ENCODE measurements at regions of chr17 and their contacts with region 1.

Region 1: DNA sequence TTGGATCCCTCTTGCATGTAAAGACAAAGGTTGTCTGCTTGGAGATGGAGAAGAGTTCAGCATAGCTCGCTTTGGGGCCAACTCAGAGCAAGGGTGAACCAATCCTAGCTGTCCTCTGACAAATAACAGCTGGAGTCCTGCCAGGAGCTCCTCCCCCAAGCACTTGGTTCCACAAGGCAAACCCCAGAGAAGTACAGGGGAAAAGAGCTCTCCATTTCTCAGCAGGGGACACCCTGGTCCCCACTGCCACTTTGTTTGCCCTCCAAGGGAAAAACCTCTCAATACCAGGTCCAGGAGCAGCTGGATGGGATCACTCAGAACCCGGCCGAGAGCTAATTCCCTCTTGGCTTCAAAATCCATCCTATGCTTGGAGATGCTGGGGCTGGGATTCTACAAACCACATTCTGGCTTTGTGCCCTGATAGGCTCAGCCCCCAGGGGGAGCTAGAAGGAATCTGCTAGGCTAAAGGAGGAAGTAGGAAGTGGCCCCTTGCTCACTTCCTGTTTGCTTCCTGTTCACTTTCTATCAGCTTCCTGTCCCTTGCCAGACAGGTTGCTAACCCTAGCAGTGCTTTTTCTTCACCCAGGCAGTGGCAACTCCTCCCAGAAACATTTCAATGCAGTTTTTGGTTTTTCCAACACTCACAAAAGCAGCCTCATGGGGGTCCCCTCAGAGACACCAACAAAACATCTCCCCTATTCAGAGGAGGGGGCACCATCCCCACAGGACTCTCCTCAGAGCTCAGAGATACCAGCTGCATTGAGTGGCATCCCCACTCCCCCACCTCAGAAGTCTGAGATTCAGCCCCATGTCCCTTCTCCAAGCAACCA is 30.7 kb downstream of the CDRT4 start:
- DNase-seq: peak; percentile 34
- ATAC-seq: no peak
- H3K4me3 ChIP-seq: no peak overlapping the region
- H3K27ac ChIP-seq: peak overlapping the region; percentile 6; the same call in 1 of the 2 replicates
- H3K4me1 ChIP-seq: peaks cover 23% of the 10 kb centered on the region
- H3K27me3 ChIP-seq: no peaks in the 10 kb centered on the region
- CTCF ChIP-seq: peak; percentile 30; the same call in 1 of the 2 replicates
- POLR2A ChIP-seq: no peak
- RAD21 ChIP-seq: no peak

Region 2: GRCh38 chr17:15307710-15308111 is 129.0 kb before region 1 on chr17:
- CTCF ChIA-PET with region 1: no interaction called
- POLR2A ChIA-PET with region 1: no interaction called
- dilution Hi-C with region 1: no loop called
- in situ Hi-C with region 1: no loop called
- intact Hi-C with region 1: loop called (anchors 1 kb)
- DNase-seq: peak; percentile 89
- ATAC-seq: peak; percentile 79
- H3K4me3 ChIP-seq: no peak overlapping the region
- H3K27ac ChIP-seq: peak overlapping the region; percentile 20; the same call in 1 of the 2 replicates
- H3K4me1 ChIP-seq: peaks cover 20% of the 10 kb centered on the region
- H3K27me3 ChIP-seq: peaks cover 8% of the 10 kb centered on the region
- CTCF ChIP-seq: no peak
- POLR2A ChIP-seq: no peak
- RAD21 ChIP-seq: no peak

Region 3: DNA sequence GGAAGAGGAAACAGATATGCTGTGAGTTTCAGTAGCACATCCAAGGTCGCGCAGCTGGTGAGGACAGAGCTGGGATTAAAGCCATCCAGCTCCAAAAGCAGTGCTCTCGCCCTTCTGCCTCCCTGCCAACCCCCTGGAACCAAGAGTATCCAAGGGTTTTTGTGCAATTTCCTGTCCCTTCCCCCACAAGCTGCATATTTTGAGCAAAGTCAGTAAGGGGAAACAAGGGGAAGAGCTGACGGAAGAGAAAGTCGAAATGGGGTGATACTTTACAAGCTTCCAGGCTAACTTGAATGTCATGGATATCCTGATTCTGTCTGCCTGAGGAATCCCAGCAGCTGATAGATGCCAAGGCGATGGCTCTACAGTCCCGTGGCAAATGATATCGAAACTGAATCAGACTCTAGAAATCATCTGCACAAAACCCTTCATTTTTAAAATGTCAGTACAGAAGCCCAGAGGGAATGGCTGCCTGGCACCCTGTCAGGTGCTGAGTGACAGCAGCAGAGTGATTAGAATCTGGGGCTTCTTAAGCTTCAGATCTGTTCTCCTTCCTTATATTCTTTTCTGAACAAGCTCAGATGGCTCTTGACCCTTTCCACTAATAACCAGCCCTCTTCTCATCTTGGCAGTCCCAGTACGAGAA is 52.4 kb before region 1 on chr17:
- CTCF ChIA-PET with region 1: interaction called, 3 read pairs
- POLR2A ChIA-PET with region 1: no interaction called
- dilution Hi-C with region 1: no loop called
- in situ Hi-C with region 1: no loop called
- intact Hi-C with region 1: loop called (anchors 2 kb)
- DNase-seq: peak; percentile 25
- ATAC-seq: peak; percentile 54
- H3K4me3 ChIP-seq: peak overlapping the region; percentile 35; the same call in 1 of the 2 replicates
- H3K27ac ChIP-seq: peak overlapping the region; percentile 82; the same call in 1 of the 2 replicates
- H3K4me1 ChIP-seq: peaks cover 7% of the 10 kb centered on the region
- H3K27me3 ChIP-seq: no peaks in the 10 kb centered on the region; the same call in 1 of the 2 replicates
- CTCF ChIP-seq: no peak
- POLR2A ChIP-seq: no peak
- RAD21 ChIP-seq: no peak

Region 4: GRCh38 chr17:15456972-15457722 is 20.5 kb after region 1 on chr17:
- CTCF ChIA-PET with region 1: interaction called, 11 read pairs
- POLR2A ChIA-PET with region 1: no interaction called
- dilution Hi-C with region 1: no loop called
- in situ Hi-C with region 1: no loop called
- intact Hi-C with region 1: loop called (anchors 2 kb)
- DNase-seq: peak; percentile 84
- ATAC-seq: peak; percentile 76
- H3K4me3 ChIP-seq: no peak overlapping the region
- H3K27ac ChIP-seq: peak overlapping the region; percentile 66
- H3K4me1 ChIP-seq: peaks cover 22% of the 10 kb centered on the region
- H3K27me3 ChIP-seq: no peaks in the 10 kb centered on the region
- CTCF ChIP-seq: peak; percentile 51
- POLR2A ChIP-seq: no peak
- RAD21 ChIP-seq: peak; percentile 54

Region 5: DNA sequence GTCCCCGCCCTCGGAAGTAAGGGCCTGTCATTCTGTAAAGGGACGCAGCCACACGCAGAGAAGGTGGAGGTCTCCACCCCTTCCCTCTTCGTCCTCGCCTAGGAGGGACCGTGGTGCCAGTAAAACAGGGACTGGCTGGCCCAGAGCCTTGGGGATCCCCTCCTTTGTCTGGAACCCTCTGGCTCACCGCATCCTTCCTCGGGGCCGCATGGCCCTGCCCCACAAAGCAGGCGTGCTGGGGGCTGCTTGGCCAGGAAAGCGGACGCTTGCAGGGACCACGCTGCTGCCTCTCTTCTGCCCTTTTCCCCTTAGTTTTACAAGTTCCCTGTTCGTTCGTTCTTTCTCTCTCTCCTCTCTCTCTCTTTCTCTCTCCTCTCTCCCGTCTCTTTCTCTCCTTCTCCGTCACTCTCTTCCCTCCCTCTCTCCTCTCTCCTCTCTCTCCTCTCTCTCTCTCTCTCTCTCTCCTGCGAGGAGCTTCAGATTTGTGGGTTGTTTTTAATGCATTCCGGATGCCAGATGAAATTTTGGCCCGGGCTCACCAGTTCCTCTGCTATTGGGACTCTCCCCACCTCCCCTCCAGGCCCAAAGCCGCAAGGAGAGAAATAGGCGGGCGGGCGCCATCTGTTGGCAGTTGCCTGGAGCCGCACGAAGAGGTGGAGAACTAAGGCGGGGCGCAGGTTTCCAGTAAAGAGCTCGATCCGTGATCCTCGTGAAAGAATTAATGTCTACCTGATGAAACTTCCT is 65.9 kb after region 1 on chr17:
- CTCF ChIA-PET with region 1: interaction called, 3 read pairs
- POLR2A ChIA-PET with region 1: no interaction called
- dilution Hi-C with region 1: no loop called
- in situ Hi-C with region 1: no loop called
- intact Hi-C with region 1: loop called (anchors 2 kb)
- DNase-seq: peak; percentile 93
- ATAC-seq: peak; percentile 99
- H3K4me3 ChIP-seq: no peak overlapping the region
- H3K27ac ChIP-seq: peak overlapping the region; percentile 47; the same call in 1 of the 2 replicates
- H3K4me1 ChIP-seq: peaks cover 7% of the 10 kb centered on the region; the same call in 1 of the 2 replicates
- H3K27me3 ChIP-seq: no peaks in the 10 kb centered on the region
- CTCF ChIP-seq: peak; percentile 97
- POLR2A ChIP-seq: peak; percentile 43; the same call in 1 of the 2 replicates
- RAD21 ChIP-seq: peak; percentile 97

Measured in IMR-90 (cell line).